ENCODE measurements at regions of chr9 and their contacts with region 1.

Region 1: DNA sequence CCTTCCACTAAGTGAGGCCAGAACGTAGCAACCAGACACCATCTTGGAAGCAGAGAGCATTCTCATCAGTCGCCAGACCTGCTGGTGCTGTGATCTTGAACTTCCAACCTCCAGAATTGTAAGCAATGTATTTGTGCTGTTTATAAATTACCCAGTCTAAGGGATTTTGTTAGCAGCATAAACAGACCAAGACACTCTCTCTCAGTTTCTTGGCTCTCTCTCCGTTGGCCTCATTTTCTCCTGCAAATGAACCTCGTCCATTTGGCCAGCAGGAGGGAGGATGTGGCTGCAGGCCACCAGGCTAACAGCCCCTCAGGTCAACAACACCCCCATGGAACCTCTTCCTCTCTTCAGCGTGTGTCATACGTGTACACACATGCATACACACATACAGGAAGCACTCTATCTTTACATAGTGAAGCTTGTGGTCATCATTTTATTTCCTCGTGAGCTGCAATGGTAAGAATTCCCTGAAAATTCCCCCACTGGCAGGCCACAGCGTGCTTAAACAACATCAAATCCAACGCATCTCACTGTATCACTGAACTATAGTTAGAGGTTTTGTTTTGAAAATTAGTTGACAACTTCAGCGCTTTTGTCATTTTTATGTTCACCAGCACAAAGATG is 62.8 kb upstream of the PPP1R26 start:
- DNase-seq: no peak
- H3K4me3 ChIP-seq: no peak overlapping the region
- H3K27ac ChIP-seq: no peak overlapping the region
- H3K4me1 ChIP-seq: no peaks in the 10 kb centered on the region
- H3K27me3 ChIP-seq: no peaks in the 10 kb centered on the region
- CTCF ChIP-seq: no peak

Region 2: DNA sequence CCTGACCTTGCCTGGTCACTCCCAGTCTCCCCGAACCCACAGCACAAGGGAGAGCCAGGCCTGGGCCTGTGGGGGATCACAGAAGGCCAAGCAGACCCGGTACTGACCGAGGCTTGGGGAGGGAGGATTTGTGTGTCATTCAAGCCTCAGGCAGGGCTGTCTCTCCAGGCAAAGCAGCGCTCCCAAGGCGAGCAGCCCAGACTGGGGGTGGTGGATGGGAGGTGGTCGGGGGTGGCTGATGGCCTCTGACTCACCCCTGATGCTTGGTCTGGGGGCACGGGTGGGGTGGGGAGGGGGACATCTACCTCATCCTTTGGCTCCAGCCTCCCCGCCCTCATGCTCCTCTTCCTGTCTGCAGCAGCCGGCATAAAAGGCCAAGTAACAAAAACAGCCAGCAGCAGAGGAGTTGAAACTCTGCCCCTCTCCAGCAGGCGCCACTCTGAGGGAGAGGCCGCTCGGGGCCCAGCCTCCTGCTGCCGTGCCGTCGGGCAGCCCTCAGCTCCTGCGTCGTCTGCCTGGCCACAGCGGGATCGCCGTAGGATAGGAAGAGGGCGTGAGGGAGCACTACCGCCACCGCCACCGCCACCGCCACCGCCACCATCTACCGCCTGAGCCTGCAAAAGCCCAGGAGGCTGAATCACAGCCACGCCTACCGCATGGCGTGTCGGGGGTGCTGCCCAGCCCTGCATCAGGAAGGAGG is 163.3 kb before region 1 on chr9:
- CTCF ChIA-PET with region 1: no interaction called
- dilution Hi-C with region 1: no loop called
- in situ Hi-C with region 1: no loop called
- intact Hi-C with region 1: no loop called
- DNase-seq: no peak
- H3K4me3 ChIP-seq: no peak overlapping the region
- H3K27ac ChIP-seq: no peak overlapping the region
- H3K4me1 ChIP-seq: no peaks in the 10 kb centered on the region
- H3K27me3 ChIP-seq: no peaks in the 10 kb centered on the region
- CTCF ChIP-seq: no peak

Region 3: GRCh38 chr9:135308821-135309762 is 107.7 kb before region 1 on chr9:
- CTCF ChIA-PET with region 1: no interaction called
- dilution Hi-C with region 1: loop called (anchors 5 kb)
- in situ Hi-C with region 1: no loop called
- intact Hi-C with region 1: no loop called
- DNase-seq: no peak
- H3K4me3 ChIP-seq: no peak overlapping the region
- H3K27ac ChIP-seq: no peak overlapping the region
- H3K4me1 ChIP-seq: no peaks in the 10 kb centered on the region
- H3K27me3 ChIP-seq: no peaks in the 10 kb centered on the region
- CTCF ChIP-seq: no peak

Region 4: GRCh38 chr9:135379540-135380267 is 37.1 kb before region 1 on chr9:
- CTCF ChIA-PET with region 1: no interaction called
- dilution Hi-C with region 1: loop called (anchors 5 kb)
- in situ Hi-C with region 1: no loop called
- intact Hi-C with region 1: no loop called
- DNase-seq: no peak
- H3K4me3 ChIP-seq: no peak overlapping the region
- H3K27ac ChIP-seq: no peak overlapping the region
- H3K4me1 ChIP-seq: no peaks in the 10 kb centered on the region
- H3K27me3 ChIP-seq: no peaks in the 10 kb centered on the region
- CTCF ChIP-seq: no peak

Measured in mammary epithelial cell (primary cell).